Dorsolateral prefrontal cortex (tissue), 120 donors: ENCODE measurements at regions of chr4 and their contacts with region 1.

Region 1: DNA sequence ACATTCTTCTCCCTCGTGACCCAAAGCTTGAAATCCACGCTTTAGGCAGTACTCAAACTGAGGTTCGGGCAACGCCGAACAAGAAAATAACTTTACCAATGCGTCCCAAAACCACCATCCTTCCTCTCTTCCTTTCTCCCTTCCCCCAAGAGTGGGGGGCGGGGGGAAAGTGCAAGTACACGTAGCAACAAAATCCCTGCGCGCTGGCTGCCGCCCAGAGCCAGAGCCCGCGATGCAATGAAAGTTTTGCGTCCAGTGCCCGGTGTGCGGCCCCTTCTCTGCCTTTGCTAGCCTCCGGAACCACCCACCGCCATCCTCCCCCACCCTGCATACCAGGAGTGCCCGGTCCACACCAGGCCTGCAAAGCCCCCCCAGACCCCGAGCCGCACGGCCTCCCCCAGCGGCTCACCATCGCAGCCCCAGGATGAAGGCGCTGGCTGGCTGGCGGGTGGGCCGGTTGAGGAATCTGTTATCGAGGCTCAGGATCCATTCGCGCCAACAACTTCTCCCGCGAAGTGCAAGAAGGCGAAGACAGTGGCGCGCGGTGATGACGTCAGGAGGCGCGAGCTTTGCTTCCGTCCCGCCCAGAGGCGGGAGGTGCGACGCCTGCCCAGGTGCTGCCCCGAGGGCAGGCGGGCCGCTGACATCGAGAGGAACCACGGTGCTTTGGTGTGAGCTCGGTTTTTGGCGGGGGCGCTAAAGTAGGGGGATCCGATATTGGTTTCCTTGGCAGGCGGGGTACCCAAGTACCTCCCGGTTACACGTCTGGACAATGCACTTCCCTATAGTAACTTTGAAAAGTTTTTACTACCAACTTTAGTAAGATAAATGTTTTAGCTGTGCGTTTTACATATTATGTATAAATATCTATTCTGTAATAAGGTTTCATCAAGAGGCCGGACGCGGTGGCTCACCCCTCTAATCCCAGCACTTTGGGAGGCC is at the start of gene RFC1:
- DNase-seq: peak; percentile 75 to 91 (median 84)
- H3K4me3 ChIP-seq: peak within 1 kb of the TSS; percentile 61 to 99 (median 92)
- H3K27ac ChIP-seq: peak within 1 kb of the TSS in 56 of 59 donors; percentile 28 to 95 (median 84)
- H3K27me3 ChIP-seq: no peaks in the 10 kb centered on the region
- CTCF ChIP-seq: peak in 13 of 56 donors; percentile 4 to 39 (median 20)
- total RNA-seq, gene RFC1: 30.5 to 73.5 (median 48.0) TPM

Region 2: GRCh38 chr4:39181905-39182638 is 184.0 kb before region 1 on chr4 and contains the start of gene WDR19:
- intact Hi-C with region 1: loop called (anchors 5 kb)
- DNase-seq: peak; percentile 98 to 100 (median 99)
- H3K4me3 ChIP-seq: peak within 1 kb of the TSS; percentile 55 to 93 (median 82)
- H3K27ac ChIP-seq: peak within 1 kb of the TSS; percentile 40 to 92 (median 83)
- H3K27me3 ChIP-seq: no peaks in the 10 kb centered on the region
- CTCF ChIP-seq: peak in 55 of 56 donors; percentile 20 to 78 (median 59)
- total RNA-seq, gene WDR19: 39.7 to 107 (median 68.1) TPM

Region 3: GRCh38 chr4:39308611-39309010 is 57.5 kb before region 1 on chr4:
- intact Hi-C with region 1: loop called in 1 of 2 experiments (anchors 10 kb)
- DNase-seq: peak in 2 of 10 donors; percentile 15 to 26
- H3K4me3 ChIP-seq: no peak overlapping the region
- H3K27ac ChIP-seq: peak overlapping the region in 48 of 59 donors; percentile 0 to 73 (median 46)
- H3K27me3 ChIP-seq: no peaks in the 10 kb centered on the region
- CTCF ChIP-seq: no peak

Region 4: GRCh38 chr4:39458505-39459300 is 92.6 kb after region 1 on chr4 and contains the starts of genes LIAS and RPL9:
- intact Hi-C with region 1: loop called in 1 of 2 experiments (anchors 10 kb)
- DNase-seq: peak; percentile 88 to 97 (median 93)
- H3K4me3 ChIP-seq: peak within 1 kb of the TSS; percentile 63 to 99 (median 91)
- H3K27ac ChIP-seq: peak within 1 kb of the TSS; percentile 3 to 98 (median 92)
- H3K27me3 ChIP-seq: no peaks in the 10 kb centered on the region
- CTCF ChIP-seq: peak in 17 of 56 donors; percentile 3 to 30 (median 14)
- total RNA-seq, gene LIAS: 16.1 to 30.6 (median 22.3) TPM
- total RNA-seq, gene RPL9: 295 to 743 (median 520) TPM